Panc1 (cell line): ENCODE measurements at regions of chr20 and their contacts with region 1.

Region 1: DNA sequence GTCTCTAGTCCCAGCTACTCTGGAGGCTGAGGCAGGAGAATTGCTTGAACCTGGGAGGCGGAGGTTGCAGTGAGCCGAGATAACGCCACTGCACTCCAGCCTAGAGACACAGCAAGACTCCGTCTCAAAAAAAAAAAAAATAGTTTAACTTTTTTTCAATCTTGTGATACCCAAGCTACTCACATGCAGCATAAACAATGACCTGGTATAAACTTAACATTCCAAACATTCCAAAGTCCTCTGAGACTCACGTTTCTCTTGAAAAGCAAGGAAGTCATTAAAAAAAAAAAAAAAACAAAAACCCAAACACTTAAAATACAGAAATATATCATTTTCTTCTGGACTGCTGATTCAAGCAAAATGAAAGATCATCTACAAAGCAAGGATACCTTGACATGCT is 14.3 kb downstream of the CRNKL1 start:
- DNase-seq: no peak
- ATAC-seq: no peak
- H3K4me3 ChIP-seq: no peak overlapping the region
- H3K27ac ChIP-seq: no peak overlapping the region
- H3K4me1 ChIP-seq: no peaks in the 10 kb centered on the region
- H3K27me3 ChIP-seq: no peaks in the 10 kb centered on the region
- CTCF ChIP-seq: no peak

Region 2: GRCh38 chr20:20012517-20012916 is 25.4 kb before region 1 on chr20:
- CTCF ChIA-PET with region 1: no interaction called
- POLR2A ChIA-PET with region 1: interaction called, 10 read pairs
- in situ Hi-C with region 1: no loop called
- intact Hi-C with region 1: no loop called
- DNase-seq: no peak
- ATAC-seq: no peak
- H3K4me3 ChIP-seq: no peak overlapping the region
- H3K27ac ChIP-seq: no peak overlapping the region
- H3K4me1 ChIP-seq: peaks cover 17% of the 10 kb centered on the region
- H3K27me3 ChIP-seq: no peaks in the 10 kb centered on the region
- CTCF ChIP-seq: no peak

Region 3: DNA sequence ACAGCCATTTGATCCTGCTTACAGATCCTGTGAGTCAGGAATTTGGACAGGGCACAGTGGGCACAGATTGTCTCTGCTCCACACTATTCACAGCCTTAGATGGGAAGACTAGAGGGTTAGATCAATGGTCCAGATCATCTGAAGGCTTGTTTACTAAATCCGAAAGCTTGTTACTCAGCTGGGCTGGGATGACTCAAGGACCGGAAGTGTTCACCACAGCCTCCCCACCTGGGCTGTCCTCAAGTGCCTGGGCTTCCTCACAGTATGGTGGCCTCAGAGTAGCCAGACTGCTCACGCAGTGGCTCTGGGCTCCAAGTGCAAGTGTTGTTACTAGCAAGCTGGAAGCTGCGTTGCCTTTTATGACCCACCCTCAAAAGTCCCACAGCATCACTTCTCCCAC is 254.5 kb after region 1 on chr20:
- CTCF ChIA-PET with region 1: no interaction called
- POLR2A ChIA-PET with region 1: no interaction called
- in situ Hi-C with region 1: no loop called
- intact Hi-C with region 1: no loop called
- DNase-seq: no peak
- ATAC-seq: no peak
- H3K4me3 ChIP-seq: no peak overlapping the region
- H3K27ac ChIP-seq: no peak overlapping the region
- H3K4me1 ChIP-seq: no peaks in the 10 kb centered on the region
- H3K27me3 ChIP-seq: no peaks in the 10 kb centered on the region
- CTCF ChIP-seq: no peak